Dendritic cell treated with granulocyte-macrophage colony-stimulating factor and Interleukin-4, amounts not matched to agents 40 ng/mL and 50 ng/mL, for 4 days (primary cell): ENCODE measurements at regions of chr17 and their contacts with region 1.

Region 1: GRCh38 chr17:67855504-67856324 is 30.4 kb downstream of the BPTF start:
- H3K4me3 Mint-ChIP-seq: peak overlapping the region; percentile 57
- H3K27ac Mint-ChIP-seq: peak overlapping the region; percentile 65
- H3K4me1 Mint-ChIP-seq: peaks cover 37% of the 10 kb centered on the region
- H3K27me3 Mint-ChIP-seq: no peaks in the 10 kb centered on the region

Region 2: DNA sequence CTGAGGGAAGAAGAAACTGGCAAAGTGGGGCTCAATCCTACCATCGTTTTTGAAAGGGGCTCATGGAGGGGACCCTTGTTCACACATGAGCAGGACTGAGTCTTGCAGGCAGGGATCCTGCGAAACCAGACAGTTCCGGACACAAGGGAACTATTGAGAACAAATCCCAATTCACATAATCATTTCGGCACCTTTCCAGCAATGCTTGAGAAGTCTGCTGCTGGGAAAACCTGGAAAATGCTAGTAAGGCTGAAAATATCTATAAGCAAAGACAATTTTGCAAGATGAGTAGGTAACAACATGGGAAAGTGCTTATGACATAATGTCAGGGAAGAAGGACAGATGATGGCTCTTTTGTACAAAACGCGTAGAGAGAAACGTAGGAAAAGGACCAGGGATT is 82.5 kb before region 1 on chr17:
- intact Hi-C with region 1: no loop called
- H3K4me3 Mint-ChIP-seq: no peak overlapping the region
- H3K27ac Mint-ChIP-seq: no peak overlapping the region
- H3K4me1 Mint-ChIP-seq: peaks cover 6% of the 10 kb centered on the region
- H3K27me3 Mint-ChIP-seq: no peaks in the 10 kb centered on the region

Region 3: DNA sequence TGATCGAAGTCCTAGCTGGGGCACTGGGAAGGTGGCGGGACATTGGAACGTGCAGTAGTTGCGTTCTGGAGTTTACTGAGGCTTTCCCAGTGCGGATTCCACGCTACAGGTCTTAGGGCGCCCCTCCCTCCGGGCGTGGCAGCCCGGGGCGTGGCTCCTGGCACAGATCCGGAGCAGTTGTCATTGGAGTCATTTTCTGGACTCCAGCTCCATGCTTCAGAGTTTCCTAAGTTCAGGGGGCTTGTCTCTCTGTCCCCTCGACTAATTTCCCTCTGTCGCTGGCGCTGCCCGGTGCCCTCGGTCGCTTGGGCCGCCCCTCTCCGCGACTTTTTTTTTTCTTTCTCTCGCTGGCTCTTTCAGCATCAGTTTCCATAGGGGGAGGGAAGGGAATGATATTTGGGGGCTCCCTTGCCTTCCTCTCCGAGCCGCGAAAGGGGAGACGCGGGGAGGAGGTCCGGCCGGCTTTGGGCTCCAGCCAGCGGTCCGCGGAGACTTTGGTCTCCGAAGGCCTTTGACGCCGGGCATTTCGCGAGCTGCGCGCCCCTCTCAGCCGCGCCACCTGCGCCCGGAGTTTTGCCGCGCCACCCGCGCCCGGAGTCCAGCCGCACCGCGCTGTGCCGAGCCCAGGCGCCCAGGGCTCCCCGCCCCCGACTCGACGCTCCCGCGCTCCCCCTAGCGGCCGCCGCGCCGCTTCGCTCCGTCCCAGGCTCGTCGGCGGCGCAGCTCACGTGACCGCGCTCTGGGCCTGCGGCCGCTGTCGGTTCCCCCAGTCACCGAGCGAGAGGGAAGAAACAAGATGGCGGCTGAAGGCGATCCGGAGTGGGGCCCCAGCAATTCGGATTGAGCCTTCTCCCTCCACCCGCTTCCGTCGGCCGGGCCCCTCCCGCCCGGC is 30.7 kb before region 1 on chr17 and contains the start of gene BPTF:
- intact Hi-C with region 1: no loop called
- H3K4me3 Mint-ChIP-seq: peak within 1 kb of the TSS; percentile 89
- H3K27ac Mint-ChIP-seq: peak within 1 kb of the TSS; percentile 84
- H3K4me1 Mint-ChIP-seq: peaks cover 26% of the 10 kb centered on the region
- H3K27me3 Mint-ChIP-seq: peaks cover 18% of the 10 kb centered on the region

Region 4: GRCh38 chr17:67912656-67913055 is 56.9 kb after region 1 on chr17:
- intact Hi-C with region 1: loop called (anchors 10 kb)
- H3K4me3 Mint-ChIP-seq: no peak overlapping the region
- H3K27ac Mint-ChIP-seq: no peak overlapping the region
- H3K4me1 Mint-ChIP-seq: peaks cover 13% of the 10 kb centered on the region
- H3K27me3 Mint-ChIP-seq: no peaks in the 10 kb centered on the region